Ovary (tissue), 10 donors: ENCODE measurements at regions of chr16 and their contacts with region 1.

Region 1: DNA sequence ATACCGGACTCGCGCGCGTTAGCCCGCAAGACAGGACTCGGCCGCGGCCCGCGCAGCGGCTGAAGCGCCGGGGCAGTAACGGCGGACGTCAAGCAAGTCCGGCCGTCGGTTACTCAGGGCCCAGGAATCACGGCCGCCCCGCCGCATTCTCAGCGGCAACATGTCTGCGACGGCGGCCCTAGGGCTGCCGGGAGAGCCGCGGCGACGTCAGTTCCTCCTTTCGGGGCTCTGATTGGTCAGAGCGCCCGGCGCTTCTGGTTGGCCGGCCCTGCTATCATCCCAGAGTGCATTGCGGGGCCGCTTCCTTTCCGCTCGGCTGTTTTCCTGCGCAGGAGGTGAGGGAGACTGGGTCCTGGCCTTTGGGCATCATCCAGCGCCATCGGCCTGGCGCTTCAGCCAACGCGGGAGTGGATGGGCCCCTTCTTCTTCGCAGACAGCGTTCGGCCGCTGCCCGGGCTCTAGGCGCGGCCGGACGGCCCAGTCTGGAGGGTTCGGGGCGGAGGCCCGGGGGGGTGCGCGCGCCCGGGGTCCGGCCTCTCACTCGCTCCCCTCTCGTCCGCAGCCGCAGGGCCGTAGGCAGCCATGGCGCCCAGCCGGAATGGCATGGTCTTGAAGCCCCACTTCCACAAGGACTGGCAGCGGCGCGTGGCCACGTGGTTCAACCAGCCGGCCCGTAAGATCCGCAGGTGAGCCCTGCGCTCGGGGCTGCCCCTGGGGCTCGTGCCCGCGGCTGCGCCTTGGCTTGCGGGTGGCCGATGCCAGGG is at the start of gene RPL13:
- DNase-seq: peak; percentile 94 to 96 (median 95)
- H3K4me3 ChIP-seq: peak within 1 kb of the TSS; percentile 65
- H3K27ac ChIP-seq: peak within 1 kb of the TSS; percentile 76 to 96
- H3K4me1 ChIP-seq: peaks cover 8% of the 10 kb centered on the region
- H3K27me3 ChIP-seq: no peaks in the 10 kb centered on the region
- CTCF ChIP-seq: peak in 1 of 3 donors; percentile 5
- EP300 ChIP-seq: peak; percentile 34
- POLR2A ChIP-seq: peak; percentile 98
- total RNA-seq, gene RPL13: 4,259 to 21,366 (median 5,883) TPM

Region 2: GRCh38 chr16:89241187-89242007 is 319.2 kb before region 1 on chr16:
- intact Hi-C with region 1: loop called in 1 of 4 experiments (anchors 10 kb)
- DNase-seq: peak; percentile 71 to 84 (median 81)
- H3K4me3 ChIP-seq: peak overlapping the region; percentile 49
- H3K27ac ChIP-seq: peak overlapping the region; percentile 88 to 93
- H3K4me1 ChIP-seq: no peaks in the 10 kb centered on the region
- H3K27me3 ChIP-seq: no peaks in the 10 kb centered on the region
- CTCF ChIP-seq: no peak
- EP300 ChIP-seq: no peak
- POLR2A ChIP-seq: peak; percentile 97